Spleen (tissue), 13 donors: ENCODE measurements at regions of chr4 and their contacts with region 1.

Region 1: DNA sequence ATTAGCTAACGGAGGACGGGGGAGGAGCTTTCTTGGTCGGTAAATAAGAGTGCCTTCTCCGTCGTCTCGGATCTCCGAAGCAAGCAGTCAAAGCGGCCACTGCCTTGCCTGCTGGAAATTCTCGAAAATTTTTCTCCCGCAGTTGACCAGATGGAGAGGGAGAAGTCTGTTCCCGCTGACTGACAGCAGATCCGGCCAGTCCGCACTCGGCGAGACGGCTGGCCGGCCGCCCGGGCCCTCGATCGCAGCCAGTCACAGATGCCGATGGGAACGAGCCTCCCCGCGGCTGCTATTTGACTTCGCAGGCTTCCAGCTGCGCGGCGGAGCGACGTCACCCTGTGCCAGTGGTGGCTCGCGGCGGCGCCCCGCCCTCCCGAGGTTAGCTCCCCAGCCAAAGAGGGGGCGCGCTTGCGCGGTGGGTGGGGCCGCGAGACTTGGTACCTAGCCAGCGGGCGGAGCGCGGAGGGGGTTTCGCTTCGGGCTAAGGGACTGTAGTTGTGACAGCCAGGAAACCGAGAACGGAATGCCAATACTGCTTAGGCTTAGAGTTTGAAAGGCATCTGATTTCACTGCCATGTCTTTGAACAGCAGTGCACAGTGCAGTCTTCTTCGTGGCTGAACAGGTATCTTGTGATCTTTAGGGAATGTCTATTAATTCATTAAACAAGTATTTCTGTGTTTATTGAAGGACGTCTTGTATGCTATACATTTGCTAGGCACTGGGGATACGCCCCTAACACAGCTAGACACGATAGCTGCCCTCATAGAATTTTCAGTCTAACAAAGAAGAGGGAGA is at the start of gene PPM1K:
- DNase-seq: peak; percentile 100
- H3K4me3 ChIP-seq: peak within 1 kb of the TSS; percentile 53 to 85 (median 62)
- H3K27ac ChIP-seq: peak within 1 kb of the TSS; percentile 96 to 100 (median 98)
- H3K4me1 ChIP-seq: peaks cover 9 to 53% (median 39%) of the 10 kb centered on the region in 6 donors
- H3K27me3 ChIP-seq: no peaks in the 10 kb centered on the region
- CTCF ChIP-seq: peak in 7 of 11 experiments; percentile 18 to 66 (median 45)
- POLR2A ChIP-seq: peak in 2 of 3 donors; percentile 36 to 88
- total RNA-seq, gene PPM1K: 41.4 to 73.5 (median 48.7) TPM

Region 2: DNA sequence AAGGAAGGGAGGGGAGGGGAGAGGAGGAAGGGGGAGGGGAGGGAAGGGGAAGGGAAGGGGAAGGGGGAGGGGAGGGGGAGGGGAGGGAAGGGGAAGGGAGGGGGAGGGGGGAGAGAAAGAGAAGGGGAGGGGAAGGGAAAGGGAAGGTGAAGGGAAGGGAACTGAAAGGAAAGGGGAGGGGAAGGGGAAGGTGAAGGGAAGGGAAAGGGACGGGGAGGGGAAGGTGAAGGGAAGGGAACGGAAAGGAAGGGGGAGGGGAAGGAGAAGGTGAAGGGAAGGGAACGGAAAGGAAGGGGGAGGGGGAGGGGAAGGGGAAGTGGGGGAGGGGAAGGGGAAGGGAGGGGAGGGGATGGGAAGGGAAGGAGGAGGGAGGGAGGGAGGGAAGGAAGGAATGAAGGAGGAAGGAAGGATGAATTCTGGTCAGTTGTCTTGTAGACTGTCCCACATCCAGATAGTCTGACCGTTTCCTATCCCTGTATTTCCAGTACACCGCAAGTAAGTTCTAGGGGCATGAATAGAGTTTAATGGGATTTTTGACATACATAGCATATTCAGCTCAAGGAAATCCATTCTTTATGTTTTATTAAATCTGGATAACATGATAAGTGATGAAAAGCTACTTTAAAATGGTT is 192.7 kb after region 1 on chr4:
- intact Hi-C with region 1: loop called (anchors 10 kb)
- DNase-seq: no peak
- H3K4me3 ChIP-seq: no peak overlapping the region
- H3K27ac ChIP-seq: no peak overlapping the region
- H3K4me1 ChIP-seq: no peaks in the 10 kb centered on the region
- H3K27me3 ChIP-seq: no peaks in the 10 kb centered on the region
- CTCF ChIP-seq: no peak
- POLR2A ChIP-seq: no peak